HCT116 (cell line): ENCODE measurements at regions of chr2 and their contacts with region 1.

Region 1: GRCh38 chr2:105114551-105114950 is 76.7 kb downstream of the MRPS9 start:
- DNase-seq: peak; percentile 51
- ATAC-seq: peak; percentile 80
- H3K4me3 ChIP-seq: no peak overlapping the region
- H3K27ac ChIP-seq: no peak overlapping the region
- H3K4me1 ChIP-seq: no peaks in the 10 kb centered on the region
- H3K27me3 ChIP-seq: no peaks in the 10 kb centered on the region
- CTCF ChIP-seq: peak; percentile 66 to 86 (median 78); a peak in 5 of 6 replicates
- POLR2A ChIP-seq: no peak
- RAD21 ChIP-seq: peak; percentile 91

Region 2: GRCh38 chr2:105092797-105093196 is 21.8 kb before region 1 on chr2:
- CTCF ChIA-PET with region 1: no interaction called
- POLR2A ChIA-PET with region 1: no interaction called
- RAD21 ChIA-PET with region 1: no interaction called
- intact Hi-C with region 1: no loop called
- DNase-seq: no peak
- ATAC-seq: no peak
- H3K4me3 ChIP-seq: no peak overlapping the region
- H3K27ac ChIP-seq: no peak overlapping the region
- H3K4me1 ChIP-seq: no peaks in the 10 kb centered on the region
- H3K27me3 ChIP-seq: no peaks in the 10 kb centered on the region
- CTCF ChIP-seq: no peak
- POLR2A ChIP-seq: no peak
- RAD21 ChIP-seq: no peak

Region 3: GRCh38 chr2:105102963-105103421 is 11.6 kb before region 1 on chr2:
- CTCF ChIA-PET with region 1: interaction called, 13 read pairs
- POLR2A ChIA-PET with region 1: no interaction called
- RAD21 ChIA-PET with region 1: no interaction called
- intact Hi-C with region 1: no loop called
- DNase-seq: peak; percentile 64
- ATAC-seq: peak; percentile 97
- H3K4me3 ChIP-seq: no peak overlapping the region
- H3K27ac ChIP-seq: peak overlapping the region; percentile 36; the same call in 1 of the 2 replicates
- H3K4me1 ChIP-seq: peaks cover 17 to 29% of the 10 kb centered on the region in 2 experiments
- H3K27me3 ChIP-seq: no peaks in the 10 kb centered on the region
- CTCF ChIP-seq: no peak
- POLR2A ChIP-seq: no peak
- RAD21 ChIP-seq: no peak

Region 4: DNA sequence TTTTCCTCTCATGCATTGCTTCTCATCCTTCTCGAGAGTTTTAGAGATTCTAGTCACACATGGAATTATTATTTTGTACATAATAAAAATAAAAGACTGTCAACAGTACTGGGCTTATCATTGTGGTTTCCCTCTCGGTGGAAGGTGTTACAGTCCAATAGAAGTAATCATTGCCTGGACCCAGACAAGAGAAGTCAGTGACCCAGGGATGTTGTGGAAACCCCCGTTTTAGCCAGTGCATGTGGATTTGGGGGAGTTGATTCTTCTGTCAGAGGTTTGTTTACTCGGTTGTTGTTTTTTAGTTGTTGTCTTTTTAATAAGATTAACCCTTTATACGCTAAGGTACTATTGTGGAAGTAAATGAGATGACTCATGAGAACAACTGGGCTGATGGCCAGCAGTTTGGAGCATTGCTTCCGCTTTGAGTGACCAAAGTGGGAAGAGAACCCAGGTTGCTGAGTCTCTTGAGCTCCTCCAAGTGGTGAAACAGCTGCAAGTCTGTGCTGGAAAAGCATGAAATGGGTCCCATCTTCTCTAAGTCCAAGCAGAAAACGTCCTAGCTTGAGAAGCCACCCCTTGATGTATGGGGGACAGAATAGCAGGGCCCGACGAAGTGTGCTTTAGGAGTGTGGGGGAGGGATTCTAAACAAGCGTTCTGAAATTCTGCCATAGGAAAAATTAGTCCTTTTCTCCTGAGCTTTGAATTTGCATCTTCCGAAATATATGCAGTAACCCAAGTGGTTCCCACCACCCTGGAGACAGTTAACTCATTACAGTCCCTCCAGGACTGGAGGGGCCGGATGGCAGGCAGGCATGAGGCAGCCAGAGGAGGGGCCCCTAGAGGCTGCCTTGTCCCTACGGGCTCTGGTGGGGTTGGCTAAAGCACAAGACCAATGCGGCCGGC is 65.2 kb after region 1 on chr2:
- CTCF ChIA-PET with region 1: interaction called, 17 read pairs
- POLR2A ChIA-PET with region 1: no interaction called
- RAD21 ChIA-PET with region 1: interaction called in 1 of 2 experiments, 4 read pairs
- intact Hi-C with region 1: loop called (anchors 1 kb)
- DNase-seq: peak; percentile 89
- ATAC-seq: peak; percentile 93
- H3K4me3 ChIP-seq: no peak overlapping the region
- H3K27ac ChIP-seq: no peak overlapping the region
- H3K4me1 ChIP-seq: peaks cover 10 to 15% of the 10 kb centered on the region in 2 experiments; a peak in 3 of 4 replicates
- H3K27me3 ChIP-seq: 0 out of 2 replicates have a peak, but pooled peaks cover 3% of the 10 kb centered on the region
- CTCF ChIP-seq: peak; percentile 53 to 84 (median 75); a peak in 5 of 6 replicates
- POLR2A ChIP-seq: no peak
- RAD21 ChIP-seq: peak; percentile 70

Region 5: GRCh38 chr2:105235388-105236054 is 121.0 kb after region 1 on chr2:
- CTCF ChIA-PET with region 1: interaction called, 107 read pairs
- POLR2A ChIA-PET with region 1: interaction called, 5 read pairs
- RAD21 ChIA-PET with region 1: interaction called, 4 to 8 read pairs
- intact Hi-C with region 1: loop called (anchors 1 kb)
- DNase-seq: peak; percentile 83
- ATAC-seq: peak; percentile 84
- H3K4me3 ChIP-seq: peak overlapping the region in 1 of 2 experiments; percentile 12; a peak in 2 of 4 replicates
- H3K27ac ChIP-seq: no peak overlapping the region
- H3K4me1 ChIP-seq: peaks cover 16 to 31% of the 10 kb centered on the region in 2 experiments
- H3K27me3 ChIP-seq: no peaks in the 10 kb centered on the region
- CTCF ChIP-seq: peak; percentile 77 to 90 (median 88)
- POLR2A ChIP-seq: no peak
- RAD21 ChIP-seq: peak; percentile 84

Region 6: DNA sequence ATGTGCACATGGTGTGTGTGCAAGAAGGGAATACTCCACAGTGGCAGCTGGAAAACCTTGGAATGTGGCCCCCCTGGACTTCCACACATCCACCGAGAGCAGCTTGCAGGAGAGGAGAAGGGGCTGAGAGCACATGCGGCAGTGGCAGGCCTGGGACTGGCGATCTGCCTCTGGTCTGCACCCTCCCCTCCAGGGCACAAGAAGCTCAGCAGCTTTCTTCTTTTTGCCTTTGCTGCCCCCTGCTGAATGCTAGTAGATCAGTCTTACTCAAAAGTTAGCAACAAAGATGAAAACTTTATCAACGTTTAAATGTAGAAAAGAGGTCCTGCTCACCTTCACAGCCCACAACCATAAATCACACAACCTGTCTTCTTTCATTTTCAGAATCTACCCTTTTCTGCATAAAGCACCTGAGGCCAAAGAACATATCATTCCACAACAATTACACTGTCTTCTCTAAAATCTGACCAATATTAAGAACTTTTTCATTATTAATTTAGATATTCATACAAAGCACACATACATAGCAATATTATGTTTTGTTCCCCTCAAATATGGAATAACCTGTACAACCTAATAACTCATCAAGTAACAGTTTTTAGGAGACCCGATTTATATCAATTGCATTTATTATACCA is 180.4 kb after region 1 on chr2:
- CTCF ChIA-PET with region 1: interaction called, 8 read pairs
- POLR2A ChIA-PET with region 1: no interaction called
- RAD21 ChIA-PET with region 1: no interaction called
- intact Hi-C with region 1: loop called (anchors 1 kb)
- DNase-seq: peak; percentile 43
- ATAC-seq: peak; percentile 95
- H3K4me3 ChIP-seq: no peak overlapping the region
- H3K27ac ChIP-seq: no peak overlapping the region
- H3K4me1 ChIP-seq: no peaks in the 10 kb centered on the region
- H3K27me3 ChIP-seq: no peaks in the 10 kb centered on the region
- CTCF ChIP-seq: peak; percentile 22 to 64 (median 64); a peak in 4 of 6 replicates
- POLR2A ChIP-seq: no peak
- RAD21 ChIP-seq: peak; percentile 55

Region 7: DNA sequence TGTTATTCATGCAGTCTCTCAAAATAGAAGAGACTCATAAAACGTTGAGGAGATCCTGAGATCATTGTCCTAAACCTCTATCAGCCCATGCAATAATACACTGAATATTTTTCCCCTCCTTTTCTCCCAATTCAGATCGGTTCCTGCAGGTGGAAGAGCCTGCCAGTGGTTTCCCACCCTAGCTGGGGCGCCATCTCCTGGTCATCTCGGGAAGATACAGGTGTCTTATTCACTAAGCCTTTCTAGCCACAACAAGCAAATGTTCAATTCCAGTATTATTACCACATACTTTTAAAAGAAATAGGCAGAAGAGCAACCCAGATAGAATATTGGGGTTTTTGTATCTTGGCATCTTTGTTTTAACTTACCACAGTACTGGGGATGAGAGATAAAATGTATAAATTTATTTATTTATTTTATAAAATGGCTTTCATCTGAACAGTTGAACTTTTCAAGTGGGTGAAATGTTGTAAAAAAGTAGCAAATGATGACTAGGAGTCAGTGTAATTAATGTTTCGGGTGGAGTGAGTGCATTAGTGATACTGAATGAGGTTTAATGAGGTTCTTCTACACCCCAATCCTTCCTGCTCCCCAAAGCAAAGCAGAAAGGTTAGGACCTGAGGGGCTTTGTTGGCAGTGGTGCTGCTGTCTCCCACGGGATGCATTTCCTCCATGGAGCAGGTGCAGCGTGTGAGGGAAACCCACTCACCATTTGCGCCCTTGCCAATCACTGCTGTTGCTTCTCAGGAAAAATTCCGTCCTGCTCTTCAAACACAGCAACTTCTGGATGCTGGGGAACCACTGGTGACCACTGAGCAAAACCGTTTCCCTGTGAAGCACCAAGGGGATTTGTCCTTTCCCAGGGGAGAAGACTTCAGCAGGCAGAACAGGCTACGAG is 431.4 kb after region 1 on chr2:
- CTCF ChIA-PET with region 1: no interaction called
- POLR2A ChIA-PET with region 1: no interaction called
- RAD21 ChIA-PET with region 1: no interaction called
- intact Hi-C with region 1: loop called (anchors 10 kb)
- DNase-seq: peak; percentile 46
- ATAC-seq: peak; percentile 90
- H3K4me3 ChIP-seq: no peak overlapping the region
- H3K27ac ChIP-seq: no peak overlapping the region
- H3K4me1 ChIP-seq: peaks cover 0 to 8% of the 10 kb centered on the region in 2 experiments; a peak in 1 of 4 replicates
- H3K27me3 ChIP-seq: no peaks in the 10 kb centered on the region; the same call in 1 of the 2 replicates
- CTCF ChIP-seq: peak; percentile 79 to 92 (median 83)
- POLR2A ChIP-seq: no peak
- RAD21 ChIP-seq: peak; percentile 73